ENCODE measurements at regions of chr18 and their contacts with region 1.

Region 1: GRCh38 chr18:42950732-42951131 is 164.8 kb downstream of the RIT2 start:
- DNase-seq: no peak
- H3K4me3 ChIP-seq: no peak overlapping the region
- H3K27ac ChIP-seq: no peak overlapping the region
- H3K4me1 ChIP-seq: no peaks in the 10 kb centered on the region
- H3K27me3 ChIP-seq: no peaks in the 10 kb centered on the region
- CTCF ChIP-seq: no peak

Region 2: GRCh38 chr18:42401131-42401673 is 549.5 kb before region 1 on chr18:
- CTCF ChIA-PET with region 1: no interaction called
- POLR2A ChIA-PET with region 1: no interaction called
- intact Hi-C with region 1: no loop called
- DNase-seq: no peak
- H3K4me3 ChIP-seq: no peak overlapping the region
- H3K27ac ChIP-seq: no peak overlapping the region
- H3K4me1 ChIP-seq: no peaks in the 10 kb centered on the region
- H3K27me3 ChIP-seq: no peaks in the 10 kb centered on the region
- CTCF ChIP-seq: no peak

Region 3: DNA sequence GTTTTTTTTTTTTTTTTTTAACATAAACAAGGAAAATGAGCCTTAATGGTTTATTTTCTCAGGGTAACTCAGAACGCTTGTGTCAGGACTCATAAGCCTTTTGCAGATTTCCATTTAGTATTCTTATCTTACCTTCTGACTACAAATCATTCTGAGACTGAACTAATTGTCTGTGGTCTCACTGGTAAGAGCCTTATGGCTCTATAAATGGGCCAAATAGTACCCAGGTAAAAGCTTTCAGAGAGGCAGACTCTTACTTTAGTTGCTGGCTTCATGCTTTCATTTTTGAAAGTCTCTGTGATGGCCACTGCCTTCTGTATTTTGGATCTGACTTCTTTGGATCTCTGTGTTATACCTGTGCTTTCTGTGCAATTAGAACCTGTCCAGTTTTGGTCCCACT is 238.7 kb before region 1 on chr18:
- CTCF ChIA-PET with region 1: no interaction called
- POLR2A ChIA-PET with region 1: interaction called, 22 read pairs
- intact Hi-C with region 1: no loop called
- DNase-seq: no peak
- H3K4me3 ChIP-seq: no peak overlapping the region
- H3K27ac ChIP-seq: no peak overlapping the region
- H3K4me1 ChIP-seq: no peaks in the 10 kb centered on the region
- H3K27me3 ChIP-seq: no peaks in the 10 kb centered on the region
- CTCF ChIP-seq: no peak

Region 4: GRCh38 chr18:43031169-43031568 is 80.4 kb after region 1 on chr18:
- CTCF ChIA-PET with region 1: no interaction called
- POLR2A ChIA-PET with region 1: no interaction called
- intact Hi-C with region 1: no loop called
- DNase-seq: no peak
- H3K4me3 ChIP-seq: no peak overlapping the region
- H3K27ac ChIP-seq: no peak overlapping the region
- H3K4me1 ChIP-seq: no peaks in the 10 kb centered on the region
- H3K27me3 ChIP-seq: no peaks in the 10 kb centered on the region
- CTCF ChIP-seq: no peak

Measured in A673 (cell line).